K562 (cell line): ENCODE measurements at regions of chr6 and their contacts with region 1.

Region 1: GRCh38 chr6:163413345-163414116 is 987 bp upstream of the QKI start:
- DNase-seq: peak; percentile 92 to 98 (median 97)
- ATAC-seq: peak; percentile 60
- H3K4me3 ChIP-seq: peak overlapping the region; percentile 87
- H3K27ac ChIP-seq: peak overlapping the region; percentile 94
- H3K4me1 ChIP-seq: peaks cover 0 to 12% of the 10 kb centered on the region in 2 experiments; a peak in 4 of 5 replicates
- H3K27me3 ChIP-seq: no peaks in the 10 kb centered on the region
- CTCF ChIP-seq: 0 out of 6 replicates have a peak, but pooled peaks of 1 of the 3 experiments have one; percentile 6
- EP300 ChIP-seq: no peak
- POLR2A ChIP-seq: peak; percentile 79
- RAD21 ChIP-seq: 0 out of 4 replicates have a peak, but pooled peaks of 1 of the 2 experiments have one; percentile 1

Region 2: GRCh38 chr6:163572612-163573011 is 159.1 kb after region 1 on chr6:
- CTCF ChIA-PET with region 1: no interaction called
- POLR2A ChIA-PET with region 1: no interaction called
- in situ Hi-C with region 1: no loop called
- intact Hi-C with region 1: loop called (anchors 2 kb)
- DNase-seq: peak; percentile 89 to 96 (median 92)
- ATAC-seq: peak; percentile 79
- H3K4me3 ChIP-seq: no peak overlapping the region
- H3K27ac ChIP-seq: peak overlapping the region; percentile 80
- H3K4me1 ChIP-seq: peaks cover 6 to 55% of the 10 kb centered on the region in 2 experiments
- H3K27me3 ChIP-seq: no peaks in the 10 kb centered on the region
- CTCF ChIP-seq: no peak
- EP300 ChIP-seq: peak; percentile 91; the same call in 1 of the 2 replicates
- POLR2A ChIP-seq: no peak
- RAD21 ChIP-seq: no peak

Region 3: DNA sequence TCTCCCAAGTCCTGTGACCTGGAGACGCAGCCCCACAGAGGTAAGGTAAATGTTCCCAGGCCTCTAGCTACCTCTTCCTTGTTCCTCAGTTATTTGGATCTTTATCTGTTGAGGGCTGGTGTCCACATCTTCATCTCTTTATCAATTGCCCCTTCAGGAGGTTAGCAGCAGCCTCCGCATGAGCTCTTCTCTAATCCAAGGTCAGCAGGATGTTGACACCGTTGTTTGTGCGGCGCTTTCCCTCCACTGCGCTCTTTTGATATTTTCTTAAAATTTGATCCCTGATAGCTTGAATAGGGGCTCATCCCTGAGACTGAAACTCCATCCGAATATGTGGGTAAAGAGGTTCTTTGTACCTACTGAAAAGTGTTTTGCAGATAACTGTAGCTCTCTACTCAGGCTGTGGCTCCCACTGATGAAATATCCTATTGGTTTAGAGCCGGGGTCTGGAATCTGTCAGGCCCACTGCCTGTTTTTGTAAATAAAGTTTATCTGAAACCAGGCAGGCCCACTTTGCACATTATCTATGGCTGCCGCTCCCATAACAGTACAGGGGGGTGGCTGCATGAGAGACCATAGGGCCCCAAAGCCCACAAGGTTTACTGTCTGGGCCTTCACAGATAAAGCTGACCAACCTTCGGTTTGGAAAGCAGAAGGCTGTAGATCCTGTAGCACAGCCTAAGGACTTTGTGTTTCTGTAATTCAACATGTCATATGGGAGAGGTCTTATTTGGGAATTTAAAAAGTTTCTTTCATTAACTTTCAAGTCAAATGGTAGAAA is 363.6 kb after region 1 on chr6:
- CTCF ChIA-PET with region 1: no interaction called
- POLR2A ChIA-PET with region 1: no interaction called
- in situ Hi-C with region 1: no loop called
- intact Hi-C with region 1: loop called (anchors 1 kb)
- DNase-seq: peak; percentile 77 to 98 (median 88)
- ATAC-seq: peak; percentile 98
- H3K4me3 ChIP-seq: peak overlapping the region; percentile 8; the same call in 1 of the 2 replicates
- H3K27ac ChIP-seq: peak overlapping the region; percentile 82
- H3K4me1 ChIP-seq: peaks cover 17 to 33% of the 10 kb centered on the region in 2 experiments; a peak in 4 of 5 replicates
- H3K27me3 ChIP-seq: no peaks in the 10 kb centered on the region
- CTCF ChIP-seq: no peak
- EP300 ChIP-seq: peak; percentile 99
- POLR2A ChIP-seq: peak; percentile 69; the same call in 1 of the 2 replicates
- RAD21 ChIP-seq: no peak; a peak in 1 of 4 replicates

Region 4: GRCh38 chr6:164331026-164331425 is 917.5 kb after region 1 on chr6:
- CTCF ChIA-PET with region 1: no interaction called
- POLR2A ChIA-PET with region 1: no interaction called
- in situ Hi-C with region 1: no loop called
- intact Hi-C with region 1: loop called (anchors 2 kb)
- DNase-seq: peak in 1 of 4 experiments; percentile 18
- ATAC-seq: peak; percentile 63
- H3K4me3 ChIP-seq: no peak overlapping the region
- H3K27ac ChIP-seq: no peak overlapping the region
- H3K4me1 ChIP-seq: no peaks in the 10 kb centered on the region; a peak in 1 of 5 replicates
- H3K27me3 ChIP-seq: no peaks in the 10 kb centered on the region
- CTCF ChIP-seq: no peak
- EP300 ChIP-seq: no peak
- POLR2A ChIP-seq: no peak
- RAD21 ChIP-seq: no peak